ENCODE measurements at regions of chr10 and their contacts with region 1.

Region 1: DNA sequence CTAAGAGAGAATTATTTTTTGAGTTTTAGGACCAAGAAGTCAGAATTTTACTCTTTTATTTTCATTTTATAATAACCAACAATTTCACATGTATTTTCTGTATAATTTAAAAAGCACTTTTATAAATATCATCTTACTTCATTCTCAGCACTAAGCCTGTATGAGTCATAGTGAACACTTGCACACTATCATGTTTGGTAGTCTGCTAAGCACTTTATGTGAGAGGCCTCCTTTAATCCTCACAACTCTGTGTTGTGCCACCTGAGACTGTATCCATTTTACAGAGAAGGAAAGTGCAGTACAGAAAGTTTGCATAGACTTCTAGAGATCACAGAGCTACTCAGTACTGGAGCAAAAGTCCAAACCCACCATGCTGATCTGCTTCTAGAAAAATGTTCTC is 939.6 kb downstream of the NRG3 start:
- DNase-seq: no peak
- H3K4me3 ChIP-seq: no peak overlapping the region
- H3K27ac ChIP-seq: no peak overlapping the region
- H3K4me1 ChIP-seq: no peaks in the 10 kb centered on the region
- H3K27me3 ChIP-seq: no peaks in the 10 kb centered on the region
- CTCF ChIP-seq: no peak
- EP300 ChIP-seq: no peak
- POLR2A ChIP-seq: no peak

Region 2: GRCh38 chr10:82452046-82452445 is 362.6 kb before region 1 on chr10:
- intact Hi-C with region 1: no loop called
- DNase-seq: no peak
- H3K4me3 ChIP-seq: no peak overlapping the region
- H3K27ac ChIP-seq: no peak overlapping the region
- H3K4me1 ChIP-seq: no peaks in the 10 kb centered on the region
- H3K27me3 ChIP-seq: no peaks in the 10 kb centered on the region
- CTCF ChIP-seq: no peak
- EP300 ChIP-seq: no peak
- POLR2A ChIP-seq: no peak

Region 3: DNA sequence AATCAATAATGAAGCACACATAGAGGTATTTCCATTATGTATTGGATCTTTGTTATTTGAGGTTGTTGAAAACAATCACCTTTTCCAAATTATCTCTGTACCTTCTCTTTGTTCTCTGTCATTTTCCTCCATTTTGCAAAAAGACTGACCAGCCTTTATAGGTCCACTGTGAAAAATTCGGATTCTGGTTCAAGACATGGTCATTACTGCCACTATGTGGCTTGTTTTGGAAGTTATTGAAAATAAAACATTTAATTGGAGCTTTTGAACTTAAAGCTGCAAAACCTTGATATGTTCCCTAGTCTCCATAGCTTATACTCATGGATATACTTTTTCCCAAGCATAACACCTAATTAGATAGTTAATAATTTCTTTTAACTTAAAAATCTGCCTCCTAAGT is 154.8 kb after region 1 on chr10:
- intact Hi-C with region 1: loop called (anchors 5 kb)
- DNase-seq: no peak
- H3K4me3 ChIP-seq: no peak overlapping the region
- H3K27ac ChIP-seq: no peak overlapping the region
- H3K4me1 ChIP-seq: no peaks in the 10 kb centered on the region
- H3K27me3 ChIP-seq: no peaks in the 10 kb centered on the region
- CTCF ChIP-seq: peak; percentile 35 to 44 (median 40)
- EP300 ChIP-seq: no peak
- POLR2A ChIP-seq: no peak

Measured in esophagus muscularis mucosa (tissue), 4 donors.